Activated T-helper 2 cell treated with anti-CD3 and anti-CD28 coated beads, Interferon-gamma antibody, Interleukin-2, Interleukin-4, amounts not matched to agents 10 μg/mL and 5 μg/mL and 100 μg/mL, durations not matched to agents 14 hours and 24 hours and 36 hours (primary cell): ENCODE measurements at regions of chr1 and their contacts with region 1.

Region 1: DNA sequence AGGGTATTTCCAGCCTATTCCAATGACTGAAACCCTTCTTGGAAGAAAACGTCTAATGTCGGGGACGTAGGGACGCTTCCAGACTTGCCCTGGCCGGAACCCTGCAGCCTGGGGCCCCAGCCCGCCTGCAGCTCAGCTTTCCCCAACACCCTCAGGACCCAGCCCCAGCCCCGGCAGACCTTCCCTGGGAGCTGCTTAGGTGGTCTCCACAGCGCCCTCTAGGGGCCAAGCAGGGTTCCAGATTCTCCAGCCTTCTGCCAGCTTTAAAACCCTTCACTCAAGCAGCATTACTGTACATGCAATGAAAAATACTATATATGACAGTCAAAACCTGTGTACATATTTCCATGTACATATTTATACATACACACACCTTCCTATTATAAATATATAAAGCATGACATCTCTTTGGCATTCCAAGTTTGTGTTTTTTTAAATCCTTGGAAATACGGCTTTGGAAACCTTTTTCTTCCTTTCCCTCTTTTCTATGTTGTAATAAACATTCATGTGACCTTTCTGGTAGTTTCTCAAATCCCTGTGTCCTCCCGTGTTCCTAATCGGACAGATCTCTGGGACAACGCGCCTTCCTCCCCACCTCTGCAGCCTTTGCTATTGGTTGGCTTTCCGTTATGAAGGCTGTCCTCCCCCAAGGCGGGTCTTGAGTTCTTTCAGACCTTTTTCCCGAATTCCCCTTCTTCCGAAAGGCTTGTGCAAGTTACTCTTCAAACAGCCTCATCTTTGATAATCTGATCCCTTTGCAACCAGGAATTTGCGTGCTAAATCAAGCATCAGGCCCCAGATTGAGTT is 60.3 kb downstream of the STUM start:
- DNase-seq: peak; percentile 49
- H3K4me3 Mint-ChIP-seq: no peak overlapping the region
- H3K27ac Mint-ChIP-seq: no peak overlapping the region
- H3K4me1 Mint-ChIP-seq: peaks cover 2% of the 10 kb centered on the region
- H3K27me3 Mint-ChIP-seq: peaks cover 4% of the 10 kb centered on the region

Region 2: GRCh38 chr1:226424228-226425003 is 184.5 kb before region 1 on chr1:
- intact Hi-C with region 1: loop called (anchors 2 kb)
- DNase-seq: no peak
- H3K4me3 Mint-ChIP-seq: no peak overlapping the region
- H3K27ac Mint-ChIP-seq: no peak overlapping the region
- H3K4me1 Mint-ChIP-seq: peaks cover 7% of the 10 kb centered on the region
- H3K27me3 Mint-ChIP-seq: peaks cover 5% of the 10 kb centered on the region

Region 3: GRCh38 chr1:226496453-226497015 is 112.4 kb before region 1 on chr1:
- intact Hi-C with region 1: no loop called
- DNase-seq: no peak
- H3K4me3 Mint-ChIP-seq: no peak overlapping the region
- H3K27ac Mint-ChIP-seq: no peak overlapping the region
- H3K4me1 Mint-ChIP-seq: no peaks in the 10 kb centered on the region
- H3K27me3 Mint-ChIP-seq: peaks cover 8% of the 10 kb centered on the region